Activated CD4-positive, alpha-beta T cell treated with anti-CD3 and anti-CD28 coated beads for 36 hours (primary cell): ENCODE measurements at regions of chr16 and their contacts with region 1.

Region 1: DNA sequence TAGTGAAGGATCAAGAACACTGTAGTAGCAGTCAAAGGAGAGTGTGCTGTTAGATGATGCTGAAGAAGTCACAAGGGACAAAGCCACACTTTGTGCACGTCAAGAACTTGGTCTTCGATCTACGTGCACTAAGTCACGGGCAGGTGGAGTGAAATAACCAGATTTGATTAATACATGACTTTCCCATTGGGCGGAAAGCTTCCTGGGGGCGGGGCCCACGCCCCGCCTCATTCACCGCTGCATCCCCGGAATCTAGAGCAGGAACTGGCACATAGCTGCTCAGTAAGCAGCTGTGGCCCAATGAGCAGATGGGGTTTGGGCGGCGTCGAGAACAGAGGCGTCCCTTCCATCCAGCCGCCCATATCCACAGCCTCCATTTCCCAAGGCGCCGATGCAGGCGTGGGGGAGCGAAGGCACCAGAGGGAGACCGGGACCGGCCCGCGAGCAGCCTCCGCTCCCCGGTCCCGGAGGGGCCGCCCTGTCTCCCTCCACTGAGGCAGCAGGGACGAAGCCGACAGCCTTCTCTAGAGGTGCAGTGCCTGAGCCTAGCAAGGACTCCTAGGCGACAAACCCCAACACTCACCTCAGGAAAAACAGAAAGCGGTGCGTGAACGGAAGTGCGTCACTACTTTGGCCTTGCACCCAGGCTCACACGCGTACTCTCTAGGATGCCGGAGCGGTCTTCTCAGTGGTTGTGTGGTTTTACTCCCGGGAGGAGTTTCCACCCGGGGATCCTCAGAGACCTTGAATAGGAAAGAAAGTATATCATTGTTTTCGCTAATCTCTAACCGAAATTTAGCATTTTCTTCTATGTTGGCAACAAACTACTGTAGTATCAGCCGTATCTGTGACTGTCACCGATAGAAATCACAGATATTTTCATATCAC is 4.9 kb downstream of the ZNF19 start:
- DNase-seq: peak; percentile 91
- ATAC-seq: peak; percentile 90
- H3K4me3 Mint-ChIP-seq: peak overlapping the region; percentile 75
- H3K27ac Mint-ChIP-seq: peak overlapping the region; percentile 90
- H3K4me1 Mint-ChIP-seq: peaks cover 14% of the 10 kb centered on the region
- H3K27me3 Mint-ChIP-seq: peaks cover 3% of the 10 kb centered on the region

Region 2: GRCh38 chr16:70737377-70738082 is 746.7 kb before region 1 on chr16:
- CTCF ChIA-PET with region 1: no interaction called
- POLR2A ChIA-PET with region 1: no interaction called
- intact Hi-C with region 1: loop called in 1 of 2 experiments (anchors 5 kb)
- DNase-seq: peak; percentile 91
- ATAC-seq: peak; percentile 88
- H3K4me3 Mint-ChIP-seq: peak overlapping the region; percentile 55
- H3K27ac Mint-ChIP-seq: peak overlapping the region; percentile 97
- H3K4me1 Mint-ChIP-seq: peaks cover 60% of the 10 kb centered on the region
- H3K27me3 Mint-ChIP-seq: no peaks in the 10 kb centered on the region

Region 3: GRCh38 chr16:71448274-71448866 is 35.9 kb before region 1 on chr16:
- CTCF ChIA-PET with region 1: no interaction called
- POLR2A ChIA-PET with region 1: no interaction called
- intact Hi-C with region 1: no loop called
- DNase-seq: no peak
- ATAC-seq: no peak
- H3K4me3 Mint-ChIP-seq: no peak overlapping the region
- H3K27ac Mint-ChIP-seq: no peak overlapping the region
- H3K4me1 Mint-ChIP-seq: no peaks in the 10 kb centered on the region
- H3K27me3 Mint-ChIP-seq: no peaks in the 10 kb centered on the region

Region 4: DNA sequence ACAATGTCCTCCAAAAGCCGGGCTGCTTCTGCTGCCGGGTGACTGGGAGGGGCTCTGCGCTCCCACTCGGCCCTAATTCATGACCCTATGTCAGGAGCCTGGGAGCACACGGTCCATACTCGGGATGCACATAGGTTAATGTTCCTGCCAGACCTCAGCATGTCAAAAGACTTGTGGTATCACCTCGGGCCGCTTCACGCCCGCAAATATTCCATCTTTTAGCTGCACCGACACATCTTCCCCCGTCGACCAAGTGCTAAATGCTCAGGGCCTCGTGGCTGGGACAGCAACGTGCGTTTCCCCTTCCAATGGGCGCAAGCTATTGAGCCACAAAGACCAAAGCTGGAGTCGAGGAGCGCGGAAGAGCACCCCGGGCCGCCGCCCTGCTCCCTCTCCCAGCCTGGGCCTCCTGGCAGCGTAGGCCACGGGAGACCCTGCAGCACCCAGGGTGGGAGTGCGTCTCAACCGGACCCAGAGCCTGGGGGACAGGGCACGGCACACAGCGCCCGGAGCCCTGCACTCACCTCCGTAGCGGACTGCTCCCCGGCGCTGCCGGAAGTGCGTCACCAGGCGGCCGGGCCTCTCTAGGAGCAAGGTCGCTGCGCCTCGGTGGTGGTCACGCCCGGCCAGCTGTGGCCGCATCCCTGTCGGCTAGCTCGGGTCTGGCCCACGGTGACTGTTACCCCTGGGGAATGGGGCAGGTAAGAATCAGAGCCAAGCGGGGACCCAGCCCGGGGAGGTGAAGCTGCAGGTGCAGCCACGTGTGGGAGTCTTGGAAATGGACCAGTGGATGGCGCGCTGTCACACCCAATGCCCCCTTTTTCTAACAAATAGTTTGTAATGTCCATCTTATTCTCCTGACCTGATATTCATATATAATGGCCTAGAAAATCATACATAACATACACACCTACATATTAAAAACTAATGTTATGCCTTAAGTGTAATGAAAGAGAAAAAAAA is 22.3 kb before region 1 on chr16 and contains the start of gene ZNF23:
- CTCF ChIA-PET with region 1: interaction called, 9 read pairs
- POLR2A ChIA-PET with region 1: interaction called, 4 read pairs
- intact Hi-C with region 1: loop called (anchors 1 kb)
- DNase-seq: peak; percentile 88
- ATAC-seq: peak; percentile 96
- H3K4me3 Mint-ChIP-seq: peak within 1 kb of the TSS; percentile 76
- H3K27ac Mint-ChIP-seq: peak within 1 kb of the TSS; percentile 96
- H3K4me1 Mint-ChIP-seq: peaks cover 19% of the 10 kb centered on the region
- H3K27me3 Mint-ChIP-seq: no peaks in the 10 kb centered on the region
- total RNA-seq, gene ZNF23: 9.6 to 10.9 TPM

Region 5: DNA sequence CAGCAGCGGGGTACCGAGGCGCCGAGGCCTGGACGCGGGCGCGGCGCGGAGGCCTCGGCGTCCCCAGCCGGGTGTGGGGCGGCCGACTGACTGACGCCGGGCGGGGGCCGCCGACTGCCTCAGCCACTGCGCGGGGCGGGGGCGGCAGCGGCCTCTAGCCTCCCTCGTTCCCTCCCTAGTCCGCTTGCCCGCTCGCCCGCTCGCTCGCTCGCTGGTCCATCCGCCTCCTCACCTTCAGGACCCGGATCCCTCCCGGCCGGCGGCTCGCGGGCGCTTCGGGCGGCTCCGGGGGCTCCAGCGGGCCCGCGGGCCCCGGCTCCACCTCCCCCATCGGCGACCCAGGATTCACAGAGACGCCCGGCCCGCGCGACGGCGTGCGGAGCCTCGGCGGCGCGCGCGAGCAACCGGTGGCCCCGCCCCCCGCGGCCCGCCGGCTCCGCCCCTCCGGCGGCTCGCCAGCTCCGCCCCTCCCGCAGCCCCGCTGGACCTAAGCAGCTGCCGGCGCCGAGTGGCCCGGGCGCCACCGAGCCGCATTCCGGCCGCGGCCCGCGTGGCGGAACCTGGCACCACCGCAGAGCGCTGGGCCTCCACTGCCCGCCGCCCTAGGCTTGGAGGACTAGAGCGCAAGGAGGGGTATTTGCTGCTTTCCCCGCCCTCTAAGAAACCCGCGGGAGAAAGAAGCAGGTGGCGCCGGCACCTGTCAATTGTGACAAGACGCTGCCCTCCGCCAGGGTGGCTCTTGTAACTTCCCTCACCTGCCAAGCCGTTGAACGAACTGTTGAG is 239.5 kb after region 1 on chr16:
- CTCF ChIA-PET with region 1: no interaction called
- POLR2A ChIA-PET with region 1: no interaction called
- intact Hi-C with region 1: loop called in 1 of 2 experiments (anchors 2 kb)
- DNase-seq: peak; percentile 87
- ATAC-seq: peak; percentile 87
- H3K4me3 Mint-ChIP-seq: peak overlapping the region; percentile 95
- H3K27ac Mint-ChIP-seq: peak overlapping the region; percentile 68
- H3K4me1 Mint-ChIP-seq: peaks cover 16% of the 10 kb centered on the region
- H3K27me3 Mint-ChIP-seq: no peaks in the 10 kb centered on the region

Region 6: GRCh38 chr16:71845639-71846430 is 361.6 kb after region 1 on chr16 and contains the start of gene ATXN1L:
- CTCF ChIA-PET with region 1: no interaction called
- POLR2A ChIA-PET with region 1: no interaction called
- intact Hi-C with region 1: loop called in 1 of 2 experiments (anchors 10 kb)
- DNase-seq: peak; percentile 95
- ATAC-seq: peak; percentile 82
- H3K4me3 Mint-ChIP-seq: peak within 1 kb of the TSS; percentile 87
- H3K27ac Mint-ChIP-seq: peak within 1 kb of the TSS; percentile 93
- H3K4me1 Mint-ChIP-seq: peaks cover 43% of the 10 kb centered on the region
- H3K27me3 Mint-ChIP-seq: no peaks in the 10 kb centered on the region
- total RNA-seq, gene ATXN1L: 15.4 to 16.9 TPM